Ascending aorta (tissue), 2 donors: ENCODE measurements at regions of chr6 and their contacts with region 1.

Region 1: DNA sequence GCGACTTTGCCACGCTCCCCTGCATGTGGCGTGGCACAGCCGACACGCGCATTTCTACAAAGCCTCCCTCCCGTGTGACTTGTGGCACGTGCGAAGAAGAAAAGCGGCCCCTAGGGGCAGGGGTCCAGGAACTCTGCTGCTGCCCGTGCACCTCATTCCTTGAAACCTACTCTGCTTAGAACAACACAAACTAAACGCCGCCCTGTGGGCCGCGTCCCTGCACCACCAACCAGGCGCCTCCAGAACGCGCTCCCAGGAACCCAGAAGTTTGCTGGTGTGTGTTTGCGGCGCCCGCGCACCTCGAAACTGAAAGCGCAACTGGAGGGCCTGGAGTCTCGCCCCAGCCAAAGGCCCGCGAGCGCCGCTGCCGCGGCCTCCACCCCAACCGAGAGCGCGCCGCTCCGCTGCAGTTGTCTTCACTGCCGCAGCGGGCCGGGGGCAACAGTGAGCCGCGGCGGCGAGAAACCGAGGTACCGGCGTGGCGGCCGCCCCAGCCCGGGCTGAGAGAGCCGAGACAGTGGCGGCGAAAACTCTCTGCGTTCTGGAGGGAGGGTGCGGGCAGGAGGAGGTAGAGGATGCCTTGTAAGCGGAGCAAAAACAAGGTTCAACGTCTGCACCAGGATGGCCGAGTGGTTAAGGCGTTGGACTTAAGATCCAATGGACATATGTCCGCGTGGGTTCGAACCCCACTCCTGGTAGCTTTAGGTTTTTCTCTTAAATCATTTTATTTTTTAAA is 65.8 kb downstream of the STX11 start:
- DNase-seq: peak; percentile 70 to 97
- H3K4me3 ChIP-seq: peak overlapping the region; percentile 76 to 79
- H3K27ac ChIP-seq: peak overlapping the region; percentile 88 to 93
- H3K4me1 ChIP-seq: peaks cover 0 to 10% of the 10 kb centered on the region in 2 donors
- H3K27me3 ChIP-seq: no peaks in the 10 kb centered on the region
- CTCF ChIP-seq: peak; percentile 62 to 81 (median 71)

Region 2: DNA sequence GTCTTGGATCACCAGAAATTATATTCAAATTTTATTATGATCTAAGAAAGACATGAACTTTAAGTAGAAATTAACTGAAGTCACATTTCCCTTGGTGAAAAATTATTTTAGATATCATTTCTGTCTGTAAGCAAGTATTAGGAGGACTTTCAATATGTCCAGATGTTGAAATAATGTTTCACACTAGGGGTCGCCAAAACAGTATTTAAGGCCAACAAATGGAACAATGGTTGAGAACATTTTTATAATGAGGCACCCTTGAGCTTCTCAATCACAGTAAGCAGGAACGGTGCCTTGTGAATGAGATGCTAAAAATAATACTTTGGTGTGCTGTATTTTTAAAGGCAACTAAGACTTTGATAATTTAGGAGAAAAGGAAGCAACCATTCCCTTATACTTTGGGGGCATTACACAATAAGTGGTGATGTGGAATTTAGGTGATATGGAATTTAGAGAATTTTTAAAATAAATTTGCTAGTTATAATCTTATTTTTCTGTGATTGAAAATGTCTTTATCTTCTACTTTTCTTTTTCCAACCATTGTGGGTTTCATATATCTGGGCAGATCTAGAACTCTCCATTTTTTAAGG is 111.1 kb before region 1 on chr6:
- intact Hi-C with region 1: loop called (anchors 2 kb)
- DNase-seq: no peak
- H3K4me3 ChIP-seq: no peak overlapping the region
- H3K27ac ChIP-seq: no peak overlapping the region
- H3K4me1 ChIP-seq: no peaks in the 10 kb centered on the region
- H3K27me3 ChIP-seq: no peaks in the 10 kb centered on the region
- CTCF ChIP-seq: peak; percentile 52 to 68 (median 67)

Region 3: DNA sequence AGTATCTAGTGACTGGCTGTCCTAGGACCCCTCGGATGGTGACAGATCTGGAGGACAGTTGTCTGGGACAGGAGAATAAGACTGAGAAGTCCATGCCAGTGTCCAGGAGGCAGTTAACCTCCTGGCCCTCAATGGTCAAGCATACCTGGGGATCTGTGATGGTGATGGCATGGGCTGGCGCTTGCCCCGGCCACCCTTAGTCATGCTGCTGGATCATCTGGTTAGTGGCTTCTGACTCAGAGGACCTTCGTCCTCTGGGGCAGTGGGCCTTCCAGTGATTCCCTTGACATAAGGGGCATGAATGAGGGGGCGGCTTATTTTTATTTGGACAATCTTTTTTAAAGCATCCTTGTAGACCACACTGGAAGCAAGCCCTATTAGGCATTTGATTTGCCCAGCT is 96.7 kb before region 1 on chr6:
- intact Hi-C with region 1: no loop called
- DNase-seq: no peak
- H3K4me3 ChIP-seq: no peak overlapping the region
- H3K27ac ChIP-seq: no peak overlapping the region
- H3K4me1 ChIP-seq: no peaks in the 10 kb centered on the region
- H3K27me3 ChIP-seq: no peaks in the 10 kb centered on the region
- CTCF ChIP-seq: no peak

Region 4: GRCh38 chr6:144265390-144265789 is 49.3 kb after region 1 on chr6:
- intact Hi-C with region 1: loop called (anchors 2 kb)
- DNase-seq: no peak
- H3K4me3 ChIP-seq: no peak overlapping the region
- H3K27ac ChIP-seq: peak overlapping the region; percentile 60 to 81
- H3K4me1 ChIP-seq: peaks cover 0 to 24% of the 10 kb centered on the region in 2 donors
- H3K27me3 ChIP-seq: no peaks in the 10 kb centered on the region
- CTCF ChIP-seq: no peak

Region 5: DNA sequence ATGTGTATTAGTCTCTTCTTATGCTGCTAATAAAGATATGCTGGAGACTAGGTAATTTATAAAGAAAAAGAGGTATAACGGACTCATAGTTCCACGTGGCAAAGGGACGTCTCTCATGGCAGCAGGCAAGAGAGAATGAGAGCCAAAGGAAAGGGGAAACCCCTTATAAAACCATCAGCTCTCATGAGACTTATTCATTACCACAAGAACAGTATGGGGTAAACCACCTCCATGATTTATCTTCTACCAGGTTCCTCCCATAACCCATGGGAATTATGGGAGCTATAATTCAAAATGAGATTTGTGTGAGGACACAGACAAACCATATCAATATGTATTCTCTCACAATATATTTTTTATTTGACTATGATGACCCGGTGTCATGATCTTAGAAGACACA is 178.1 kb after region 1 on chr6:
- intact Hi-C with region 1: loop called (anchors 5 kb)
- DNase-seq: no peak
- H3K4me3 ChIP-seq: no peak overlapping the region
- H3K27ac ChIP-seq: no peak overlapping the region
- H3K4me1 ChIP-seq: no peaks in the 10 kb centered on the region
- H3K27me3 ChIP-seq: no peaks in the 10 kb centered on the region
- CTCF ChIP-seq: no peak

Region 6: GRCh38 chr6:144478483-144478882 is 262.4 kb after region 1 on chr6:
- intact Hi-C with region 1: loop called (anchors 2 kb)
- DNase-seq: no peak
- H3K4me3 ChIP-seq: no peak overlapping the region
- H3K27ac ChIP-seq: peak overlapping the region; percentile 3 to 59
- H3K4me1 ChIP-seq: peaks cover 2 to 21% of the 10 kb centered on the region in 2 donors
- H3K27me3 ChIP-seq: no peaks in the 10 kb centered on the region
- CTCF ChIP-seq: no peak

Region 7: DNA sequence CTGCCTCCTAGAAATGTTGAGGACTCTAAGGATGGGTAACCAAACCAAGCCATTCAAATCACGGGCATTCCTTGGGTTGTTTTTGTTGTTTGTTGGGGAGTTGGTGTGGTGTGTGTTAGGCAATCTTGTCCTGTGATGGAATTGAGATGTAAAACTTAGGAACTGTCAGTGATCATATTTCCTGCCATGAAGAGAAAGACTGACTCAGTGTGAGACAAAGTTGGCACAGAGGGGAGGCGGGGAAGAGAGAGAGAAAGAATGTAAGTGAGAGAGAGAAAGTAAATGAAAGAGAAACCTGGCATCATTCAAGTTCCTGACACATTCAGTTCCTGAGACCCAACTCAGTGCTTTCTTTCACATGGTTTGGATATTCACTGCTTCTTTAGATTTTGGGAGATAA is 1620.1 kb after region 1 on chr6:
- intact Hi-C with region 1: no loop called
- DNase-seq: no peak
- H3K4me3 ChIP-seq: no peak overlapping the region
- H3K27ac ChIP-seq: no peak overlapping the region
- H3K4me1 ChIP-seq: no peaks in the 10 kb centered on the region
- H3K27me3 ChIP-seq: no peaks in the 10 kb centered on the region
- CTCF ChIP-seq: no peak